ENCODE measurements at regions of chr15 and their contacts with region 1.

Region 1: DNA sequence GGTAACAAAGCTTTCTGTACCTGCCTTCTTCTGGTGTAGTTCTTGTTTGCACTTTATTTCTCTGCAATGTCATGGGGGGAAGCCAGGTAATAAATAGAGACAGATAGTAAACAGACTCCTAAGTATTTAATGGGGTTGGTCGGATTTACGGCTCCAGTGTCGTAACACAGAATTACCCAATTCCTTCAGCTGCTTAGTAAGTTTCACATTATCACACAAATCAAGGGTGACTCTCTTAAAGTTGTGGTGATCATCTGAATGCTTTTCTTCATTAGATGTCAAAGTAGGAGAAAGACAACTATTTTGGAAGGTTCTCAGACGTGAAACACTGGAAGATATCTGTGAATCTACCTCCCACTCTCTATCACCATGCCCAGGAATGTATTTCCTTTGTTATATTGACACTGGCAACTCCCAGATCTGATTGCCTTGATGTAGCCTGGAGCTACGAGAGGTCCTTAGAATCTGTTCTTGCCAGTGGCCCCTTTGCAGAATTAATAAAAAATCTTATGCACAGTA is 25.0 kb upstream of the TMC3 start:
- DNase-seq: no peak
- H3K4me3 ChIP-seq: no peak overlapping the region
- H3K27ac ChIP-seq: no peak overlapping the region
- H3K4me1 ChIP-seq: no peaks in the 10 kb centered on the region
- H3K27me3 ChIP-seq: no peaks in the 10 kb centered on the region
- CTCF ChIP-seq: no peak

Region 2: GRCh38 chr15:81216422-81216821 is 182.6 kb before region 1 on chr15:
- dilution Hi-C with region 1: no loop called
- DNase-seq: no peak
- H3K4me3 ChIP-seq: no peak overlapping the region
- H3K27ac ChIP-seq: no peak overlapping the region
- H3K4me1 ChIP-seq: no peaks in the 10 kb centered on the region
- H3K27me3 ChIP-seq: no peaks in the 10 kb centered on the region
- CTCF ChIP-seq: no peak

Region 3: GRCh38 chr15:81293728-81294515 is 105.1 kb before region 1 on chr15:
- dilution Hi-C with region 1: loop called (anchors 5 kb)
- DNase-seq: no peak
- H3K4me3 ChIP-seq: no peak overlapping the region
- H3K27ac ChIP-seq: no peak overlapping the region
- H3K4me1 ChIP-seq: peaks cover 18% of the 10 kb centered on the region
- H3K27me3 ChIP-seq: no peaks in the 10 kb centered on the region
- CTCF ChIP-seq: no peak

Region 4: GRCh38 chr15:81363718-81364500 is 35.1 kb before region 1 on chr15:
- dilution Hi-C with region 1: no loop called
- DNase-seq: no peak
- H3K4me3 ChIP-seq: no peak overlapping the region
- H3K27ac ChIP-seq: no peak overlapping the region
- H3K4me1 ChIP-seq: no peaks in the 10 kb centered on the region
- H3K27me3 ChIP-seq: peaks cover 8% of the 10 kb centered on the region
- CTCF ChIP-seq: no peak

Measured in keratinocyte (primary cell).